Dorsolateral prefrontal cortex (tissue), 120 donors: ENCODE measurements at regions of chr18 and their contacts with region 1.

Region 1: DNA sequence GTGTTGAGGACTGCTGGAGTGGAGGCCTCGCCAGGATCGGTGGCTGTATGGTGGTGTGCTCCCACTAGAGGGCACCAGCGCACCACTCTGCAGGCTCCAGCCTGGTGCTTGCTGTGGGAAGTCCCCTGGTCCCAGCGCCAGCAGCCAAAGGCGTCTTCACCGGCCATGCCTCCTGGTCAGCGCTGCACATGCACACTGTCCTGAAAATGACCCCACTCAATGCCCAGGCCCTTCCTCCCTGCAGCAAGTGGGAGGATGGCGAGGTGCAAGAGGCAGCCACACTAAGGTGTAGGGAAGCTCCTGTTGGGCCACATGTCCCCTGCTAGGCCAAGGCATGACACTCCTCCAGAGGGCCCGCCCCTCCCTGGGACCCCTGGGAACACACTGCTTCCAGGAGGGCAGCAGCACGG is 136.5 kb downstream of the CTIF start:
- DNase-seq: peak; percentile 86 to 92 (median 88)
- H3K4me3 ChIP-seq: peak overlapping the region in 1 of 59 donors; percentile 13
- H3K27ac ChIP-seq: peak overlapping the region in 3 of 59 donors; percentile 7 to 32 (median 27)
- H3K27me3 ChIP-seq: no peaks in the 10 kb centered on the region
- CTCF ChIP-seq: peak; percentile 70 to 98 (median 94)

Region 2: DNA sequence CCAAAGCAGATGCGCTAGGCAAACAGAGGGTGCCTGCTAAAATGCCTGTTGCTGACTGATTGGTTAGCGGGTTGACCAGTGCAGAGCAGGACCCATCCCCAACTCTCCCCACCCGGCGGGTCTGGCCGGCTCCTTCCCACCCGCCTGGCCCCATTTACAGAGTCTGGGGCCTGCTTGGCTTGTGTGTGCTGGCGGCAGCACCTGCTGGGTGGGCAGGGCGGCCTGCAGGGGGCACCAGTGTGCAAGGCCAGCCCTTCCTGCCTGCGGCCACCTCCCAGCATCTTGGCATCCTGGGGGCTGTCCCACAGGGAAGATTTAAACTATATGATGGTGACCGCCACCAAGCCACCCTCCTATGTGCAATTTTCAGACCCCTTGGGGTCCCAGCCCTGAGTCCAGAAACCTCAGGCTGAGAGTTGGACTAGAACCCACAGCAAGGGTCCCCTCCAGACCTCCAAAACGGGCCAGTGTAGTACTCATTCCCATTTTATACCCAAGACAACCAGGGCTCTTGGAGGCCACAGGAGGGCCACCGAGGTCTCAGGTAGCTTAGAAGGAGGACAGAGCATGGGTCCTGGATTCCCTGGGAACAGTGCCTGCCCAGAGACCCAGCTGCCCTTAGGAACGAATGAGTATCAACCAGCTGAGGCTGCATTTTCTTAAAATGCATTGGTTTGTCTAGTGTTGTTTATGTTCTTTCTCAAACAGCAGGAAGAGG is 101.8 kb after region 1 on chr18:
- intact Hi-C with region 1: loop called (anchors 2 to 5 kb)
- DNase-seq: peak in 9 of 10 donors; percentile 57 to 83 (median 65)
- H3K4me3 ChIP-seq: no peak overlapping the region
- H3K27ac ChIP-seq: peak overlapping the region in 53 of 59 donors; percentile 7 to 82 (median 51)
- H3K27me3 ChIP-seq: no peaks in the 10 kb centered on the region
- CTCF ChIP-seq: peak; percentile 64 to 97 (median 88)

Region 3: GRCh38 chr18:48951448-48952286 is 276.3 kb after region 1 on chr18:
- intact Hi-C with region 1: loop called (anchors 5 kb)
- DNase-seq: peak; percentile 70 to 86 (median 82)
- H3K4me3 ChIP-seq: peak overlapping the region; percentile 67 to 94 (median 84)
- H3K27ac ChIP-seq: peak overlapping the region; percentile 93 to 100 (median 98)
- H3K27me3 ChIP-seq: no peaks in the 10 kb centered on the region
- CTCF ChIP-seq: peak in 27 of 56 donors; percentile 7 to 48 (median 31)

Region 4: GRCh38 chr18:49031511-49032188 is 356.3 kb after region 1 on chr18:
- intact Hi-C with region 1: no loop called
- DNase-seq: peak in 3 of 10 donors; percentile 26 to 34 (median 30)
- H3K4me3 ChIP-seq: no peak overlapping the region
- H3K27ac ChIP-seq: no peak overlapping the region
- H3K27me3 ChIP-seq: no peaks in the 10 kb centered on the region
- CTCF ChIP-seq: no peak

Region 5: GRCh38 chr18:49178736-49179135 is 503.4 kb after region 1 on chr18:
- intact Hi-C with region 1: loop called (anchors 5 to 10 kb)
- DNase-seq: peak in 3 of 10 donors; percentile 38 to 56 (median 40)
- H3K4me3 ChIP-seq: no peak overlapping the region
- H3K27ac ChIP-seq: peak overlapping the region in 1 of 59 donors; percentile 39
- H3K27me3 ChIP-seq: no peaks in the 10 kb centered on the region
- CTCF ChIP-seq: peak; percentile 25 to 83 (median 65)

Region 6: GRCh38 chr18:49250816-49251388 is 575.5 kb after region 1 on chr18:
- intact Hi-C with region 1: loop called in 1 of 2 experiments (anchors 5 kb)
- DNase-seq: no peak
- H3K4me3 ChIP-seq: no peak overlapping the region
- H3K27ac ChIP-seq: peak overlapping the region in 9 of 59 donors; percentile 5 to 66 (median 17)
- H3K27me3 ChIP-seq: no peaks in the 10 kb centered on the region
- CTCF ChIP-seq: peak in 55 of 56 donors; percentile 38 to 77 (median 56)

Region 7: DNA sequence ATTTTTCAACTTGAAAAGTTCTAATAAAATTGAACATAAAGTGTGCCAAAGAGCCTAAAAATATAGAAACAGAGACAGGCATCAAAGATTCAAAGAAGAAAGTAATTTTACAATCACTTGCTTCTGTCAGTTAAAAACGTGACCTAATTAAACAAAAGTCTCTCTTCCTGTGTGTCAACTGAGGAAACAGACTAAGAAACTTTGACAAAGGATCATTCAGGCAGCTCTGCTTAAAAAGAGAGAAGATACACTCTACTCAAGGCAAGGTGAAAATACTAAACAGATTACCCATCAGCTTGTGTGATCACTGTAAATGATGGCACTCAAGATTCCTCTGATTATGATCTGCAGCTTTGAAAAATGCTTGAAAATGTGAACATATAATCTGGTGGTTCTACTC is 737.3 kb after region 1 on chr18:
- intact Hi-C with region 1: loop called in 1 of 2 experiments (anchors 5 kb)
- DNase-seq: no peak
- H3K4me3 ChIP-seq: no peak overlapping the region
- H3K27ac ChIP-seq: peak overlapping the region in 20 of 59 donors; percentile 1 to 61 (median 16)
- H3K27me3 ChIP-seq: no peaks in the 10 kb centered on the region
- CTCF ChIP-seq: no peak